SK-N-SH (cell line): ENCODE measurements at regions of chr1 and their contacts with region 1.

Region 1: DNA sequence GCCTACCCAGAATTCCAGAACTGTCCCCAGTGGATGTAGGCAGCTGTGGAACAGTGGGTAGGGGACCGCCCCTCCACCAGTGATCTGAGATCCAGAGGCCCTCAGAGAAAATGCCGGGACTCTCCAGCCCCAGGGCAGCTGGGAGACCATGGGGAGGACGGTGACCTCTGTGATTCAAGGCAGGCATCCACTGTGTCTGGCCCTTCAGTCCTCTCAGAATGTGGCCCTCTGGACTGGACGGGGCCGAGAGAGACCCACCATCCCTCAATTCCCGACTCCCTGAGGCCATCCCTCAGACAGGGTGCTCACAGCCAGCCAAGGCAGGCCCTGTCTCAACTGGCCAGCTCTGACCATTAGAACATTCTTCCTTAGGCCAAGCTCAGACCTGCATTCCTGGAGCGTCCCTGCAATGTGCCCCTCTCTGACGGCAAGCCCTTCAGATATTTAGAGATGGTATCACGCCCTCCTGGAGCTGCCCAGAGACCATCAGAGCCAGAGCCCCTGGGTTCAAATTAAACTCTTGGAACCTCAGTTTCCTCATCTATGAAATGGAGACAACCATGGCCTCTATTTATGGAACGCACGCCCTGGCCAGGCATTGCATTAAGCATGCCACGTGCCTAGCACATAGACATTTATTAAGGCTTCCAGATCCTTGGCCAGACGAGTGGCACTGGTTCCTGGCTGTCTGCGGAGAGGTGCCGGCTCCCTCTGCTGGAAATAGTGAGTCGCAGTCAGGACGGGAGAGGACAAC is 9.6 kb upstream of the EPS8L3 start:
- DNase-seq: peak; percentile 86
- H3K4me3 ChIP-seq: no peak overlapping the region; a peak in 1 of 4 replicates
- H3K27ac ChIP-seq: no peak overlapping the region
- H3K4me1 ChIP-seq: peaks cover 0 to 19% of the 10 kb centered on the region in 2 experiments; a peak in 1 of 4 replicates
- H3K27me3 ChIP-seq: no peaks in the 10 kb centered on the region
- CTCF ChIP-seq: peak; percentile 92
- EP300 ChIP-seq: no peak
- RAD21 ChIP-seq: peak; percentile 98

Region 2: DNA sequence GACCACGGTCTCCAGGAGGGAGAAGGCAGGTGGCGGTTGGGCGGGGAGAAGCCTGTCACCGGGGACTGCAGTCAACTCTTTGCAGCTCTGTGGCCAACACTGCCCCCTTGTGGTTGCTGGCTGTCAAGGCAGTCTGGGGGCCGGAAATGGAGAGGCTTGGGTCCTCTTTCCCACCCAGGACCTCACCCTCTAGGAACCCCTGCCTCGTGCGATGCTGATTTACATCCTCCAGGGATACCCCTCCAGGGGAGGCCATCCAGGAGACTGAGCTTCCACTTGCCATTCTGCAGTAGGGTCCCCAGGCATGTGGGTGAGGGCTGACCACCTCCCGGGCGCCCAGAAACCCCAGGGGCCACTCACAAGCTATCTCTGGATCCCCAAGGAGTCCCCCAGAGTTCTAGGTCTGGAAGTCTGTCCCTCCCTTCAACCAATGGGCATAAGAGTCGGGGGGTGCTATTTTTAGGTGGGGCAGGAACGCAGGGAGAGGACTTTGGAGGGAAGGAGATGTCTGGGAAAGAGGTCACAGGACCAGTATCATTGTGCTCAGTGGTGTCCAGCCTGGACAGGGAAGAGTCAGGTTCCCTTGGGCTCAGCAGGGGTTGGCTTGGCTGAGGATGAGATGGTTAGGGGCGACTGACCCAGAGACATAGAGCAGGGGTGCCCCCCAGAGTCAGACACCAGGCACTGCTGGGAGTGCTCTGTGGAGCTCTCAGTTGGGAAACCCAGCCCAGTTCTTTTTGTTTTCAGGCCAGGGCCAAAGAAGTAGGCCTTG is 240.8 kb before region 1 on chr1:
- CTCF ChIA-PET with region 1: interaction called, 19 read pairs
- POLR2A ChIA-PET with region 1: no interaction called
- DNase-seq: peak; percentile 86
- H3K4me3 ChIP-seq: peak overlapping the region in 1 of 2 experiments; percentile 44; a peak in 1 of 4 replicates
- H3K27ac ChIP-seq: peak overlapping the region in 1 of 2 experiments; percentile 70; a peak in 1 of 4 replicates
- H3K4me1 ChIP-seq: peaks cover 0 to 48% of the 10 kb centered on the region in 2 experiments; a peak in 1 of 4 replicates
- H3K27me3 ChIP-seq: no peaks in the 10 kb centered on the region
- CTCF ChIP-seq: peak; percentile 84
- EP300 ChIP-seq: no peak
- RAD21 ChIP-seq: peak; percentile 93

Region 3: GRCh38 chr1:109643385-109644230 is 129.7 kb before region 1 on chr1:
- CTCF ChIA-PET with region 1: interaction called, 92 read pairs
- POLR2A ChIA-PET with region 1: no interaction called
- DNase-seq: peak; percentile 49
- H3K4me3 ChIP-seq: no peak overlapping the region
- H3K27ac ChIP-seq: peak overlapping the region in 1 of 2 experiments; percentile 29; a peak in 1 of 4 replicates
- H3K4me1 ChIP-seq: peaks cover 0 to 41% of the 10 kb centered on the region in 2 experiments; a peak in 2 of 4 replicates
- H3K27me3 ChIP-seq: no peaks in the 10 kb centered on the region
- CTCF ChIP-seq: peak; percentile 70
- EP300 ChIP-seq: no peak
- RAD21 ChIP-seq: peak; percentile 43

Region 4: DNA sequence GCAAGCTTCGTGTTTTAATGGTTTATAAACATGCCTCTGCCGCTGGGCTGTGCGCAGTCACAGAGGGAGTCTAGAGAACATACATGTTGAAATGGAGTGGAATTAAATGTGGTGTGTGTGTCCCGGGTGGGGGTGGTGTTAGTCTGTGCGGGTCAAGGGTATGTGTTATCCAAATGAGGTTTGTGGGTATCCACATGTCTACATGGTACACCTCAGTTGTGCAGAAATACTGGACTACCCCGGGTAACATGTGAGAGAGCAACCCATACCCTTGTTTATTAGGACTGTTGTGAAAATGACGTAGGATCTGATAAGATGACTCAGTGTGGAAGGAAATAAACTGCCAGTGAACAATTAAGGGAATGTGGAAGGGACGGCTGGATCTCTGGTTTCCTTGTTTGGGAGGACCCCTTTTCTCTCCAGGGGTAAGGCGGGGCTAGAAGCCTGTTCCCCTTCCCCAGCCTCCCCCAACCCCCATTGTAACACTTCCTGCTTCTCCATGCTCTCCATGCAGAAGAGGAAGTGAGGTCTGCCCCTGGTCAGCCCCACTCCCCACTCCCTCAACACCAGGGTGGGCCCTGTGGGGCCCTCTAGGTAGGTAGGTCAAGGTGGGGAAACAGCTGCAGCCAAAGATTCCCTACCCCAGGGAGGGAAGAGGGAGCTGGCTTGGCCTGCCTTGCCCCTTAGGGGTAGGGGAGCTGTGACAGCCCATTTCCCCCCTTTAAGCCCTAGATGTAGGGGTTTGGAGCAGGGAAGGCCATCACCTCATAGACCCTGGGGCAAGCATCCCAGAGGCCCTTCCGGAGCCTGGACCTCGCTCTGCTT is 10.3 kb before region 1 on chr1:
- CTCF ChIA-PET with region 1: interaction called, 36 read pairs
- POLR2A ChIA-PET with region 1: no interaction called
- DNase-seq: peak; percentile 25
- H3K4me3 ChIP-seq: no peak overlapping the region
- H3K27ac ChIP-seq: no peak overlapping the region
- H3K4me1 ChIP-seq: peaks cover 4 to 15% of the 10 kb centered on the region in 2 experiments; a peak in 2 of 4 replicates
- H3K27me3 ChIP-seq: no peaks in the 10 kb centered on the region
- CTCF ChIP-seq: no peak
- EP300 ChIP-seq: no peak
- RAD21 ChIP-seq: no peak

Region 5: GRCh38 chr1:109993885-109994284 is 220.6 kb after region 1 on chr1:
- CTCF ChIA-PET with region 1: interaction called, 822 read pairs
- POLR2A ChIA-PET with region 1: no interaction called
- DNase-seq: no peak
- H3K4me3 ChIP-seq: no peak overlapping the region
- H3K27ac ChIP-seq: no peak overlapping the region
- H3K4me1 ChIP-seq: peaks cover 4% of the 10 kb centered on the region in 2 experiments; a peak in 1 of 4 replicates
- H3K27me3 ChIP-seq: no peaks in the 10 kb centered on the region
- CTCF ChIP-seq: no peak
- EP300 ChIP-seq: no peak
- RAD21 ChIP-seq: no peak

Region 6: GRCh38 chr1:110034451-110035235 is 261.3 kb after region 1 on chr1 and contains the start of gene STRIP1:
- CTCF ChIA-PET with region 1: interaction called, 14 read pairs
- POLR2A ChIA-PET with region 1: no interaction called
- DNase-seq: peak; percentile 91
- H3K4me3 ChIP-seq: peak within 1 kb of the TSS; percentile 62 to 99
- H3K27ac ChIP-seq: peak within 1 kb of the TSS; percentile 89
- H3K4me1 ChIP-seq: peaks cover 4 to 9% of the 10 kb centered on the region in 2 experiments; a peak in 3 of 4 replicates
- H3K27me3 ChIP-seq: no peaks in the 10 kb centered on the region
- CTCF ChIP-seq: no peak
- EP300 ChIP-seq: no peak; a peak in 1 of 4 replicates
- RAD21 ChIP-seq: no peak
- polyA plus RNA-seq, gene STRIP1: 34.6 and 46.3 TPM in 2 replicates